ENCODE measurements at regions of chr2 and their contacts with region 1.

Region 1: GRCh38 chr2:207166039-207166348 is 246 bp upstream of the KLF7 start:
- DNase-seq: peak; percentile 99
- ATAC-seq: peak; percentile 95
- H3K4me3 ChIP-seq: peak overlapping the region; percentile 70
- H3K27ac ChIP-seq: peak overlapping the region in 1 of 2 donors; percentile 100
- H3K4me1 ChIP-seq: peaks cover 1 to 5% of the 10 kb centered on the region in 2 donors
- H3K27me3 ChIP-seq: no peaks in the 10 kb centered on the region

Region 2: DNA sequence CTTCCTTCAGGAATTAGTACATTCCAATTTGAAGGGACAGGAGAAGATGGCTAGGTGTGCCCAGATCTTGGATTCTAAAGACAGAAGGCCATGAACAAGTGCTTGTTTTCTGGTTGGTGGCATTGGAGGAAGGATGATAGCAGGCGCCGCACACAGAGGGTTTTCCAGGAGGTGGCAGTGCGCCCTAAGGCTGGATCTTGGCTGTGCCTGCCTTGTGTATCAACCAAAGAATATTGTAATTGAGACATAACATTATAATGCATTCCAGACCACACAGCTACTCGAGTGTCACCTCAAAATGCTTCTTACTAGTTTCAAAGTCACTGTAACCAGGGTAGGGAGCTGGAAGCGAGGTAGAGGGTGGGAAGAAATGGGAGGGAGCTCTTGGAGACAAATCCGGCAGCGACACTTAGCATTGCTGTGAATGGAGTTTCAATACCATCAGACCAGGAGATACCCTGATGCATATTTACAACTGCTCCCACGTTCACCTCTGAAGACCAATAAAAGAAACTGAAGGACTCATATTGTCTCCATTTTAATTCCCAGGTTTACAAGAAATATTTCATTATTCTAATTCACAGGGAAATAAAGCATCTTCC is 184.2 kb before region 1 on chr2:
- intact Hi-C with region 1: loop called (anchors 5 to 10 kb)
- DNase-seq: peak; percentile 85 to 93
- ATAC-seq: peak; percentile 86
- H3K4me3 ChIP-seq: no peak overlapping the region
- H3K27ac ChIP-seq: no peak overlapping the region
- H3K4me1 ChIP-seq: no peaks in the 10 kb centered on the region
- H3K27me3 ChIP-seq: no peaks in the 10 kb centered on the region

Region 3: GRCh38 chr2:207046724-207047123 is 119.3 kb before region 1 on chr2:
- intact Hi-C with region 1: loop called (anchors 5 kb)
- DNase-seq: no peak
- ATAC-seq: no peak
- H3K4me3 ChIP-seq: no peak overlapping the region
- H3K27ac ChIP-seq: no peak overlapping the region
- H3K4me1 ChIP-seq: peaks cover 2 to 6% of the 10 kb centered on the region in 2 donors
- H3K27me3 ChIP-seq: no peaks in the 10 kb centered on the region

Region 4: DNA sequence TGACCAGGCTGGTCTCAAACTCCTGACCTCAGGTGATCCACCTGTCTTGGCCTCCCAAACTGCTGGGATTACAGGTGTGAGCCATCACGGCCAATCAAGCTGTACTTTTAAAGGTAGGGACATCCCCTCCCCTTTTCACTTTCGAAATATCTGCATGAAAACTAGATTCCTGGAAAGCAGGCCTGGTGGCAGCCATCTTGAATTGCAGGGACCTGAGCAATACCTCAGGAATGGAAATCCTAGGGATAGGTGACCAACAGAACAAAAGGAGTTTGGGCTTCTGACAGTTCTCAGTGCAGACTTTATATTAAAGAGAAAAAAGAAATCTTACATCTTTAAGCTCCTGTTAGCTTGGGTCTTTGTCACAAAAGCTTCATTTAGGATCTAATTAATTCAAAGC is 62.9 kb before region 1 on chr2:
- intact Hi-C with region 1: no loop called
- DNase-seq: no peak
- ATAC-seq: no peak
- H3K4me3 ChIP-seq: no peak overlapping the region
- H3K27ac ChIP-seq: no peak overlapping the region
- H3K4me1 ChIP-seq: peaks cover 2 to 8% of the 10 kb centered on the region in 2 donors
- H3K27me3 ChIP-seq: no peaks in the 10 kb centered on the region

Region 5: GRCh38 chr2:207227062-207227748 is 61.2 kb after region 1 on chr2:
- intact Hi-C with region 1: no loop called
- DNase-seq: no peak
- ATAC-seq: peak; percentile 56
- H3K4me3 ChIP-seq: no peak overlapping the region
- H3K27ac ChIP-seq: no peak overlapping the region
- H3K4me1 ChIP-seq: peaks cover 1 to 4% of the 10 kb centered on the region in 2 donors
- H3K27me3 ChIP-seq: no peaks in the 10 kb centered on the region

Region 6: DNA sequence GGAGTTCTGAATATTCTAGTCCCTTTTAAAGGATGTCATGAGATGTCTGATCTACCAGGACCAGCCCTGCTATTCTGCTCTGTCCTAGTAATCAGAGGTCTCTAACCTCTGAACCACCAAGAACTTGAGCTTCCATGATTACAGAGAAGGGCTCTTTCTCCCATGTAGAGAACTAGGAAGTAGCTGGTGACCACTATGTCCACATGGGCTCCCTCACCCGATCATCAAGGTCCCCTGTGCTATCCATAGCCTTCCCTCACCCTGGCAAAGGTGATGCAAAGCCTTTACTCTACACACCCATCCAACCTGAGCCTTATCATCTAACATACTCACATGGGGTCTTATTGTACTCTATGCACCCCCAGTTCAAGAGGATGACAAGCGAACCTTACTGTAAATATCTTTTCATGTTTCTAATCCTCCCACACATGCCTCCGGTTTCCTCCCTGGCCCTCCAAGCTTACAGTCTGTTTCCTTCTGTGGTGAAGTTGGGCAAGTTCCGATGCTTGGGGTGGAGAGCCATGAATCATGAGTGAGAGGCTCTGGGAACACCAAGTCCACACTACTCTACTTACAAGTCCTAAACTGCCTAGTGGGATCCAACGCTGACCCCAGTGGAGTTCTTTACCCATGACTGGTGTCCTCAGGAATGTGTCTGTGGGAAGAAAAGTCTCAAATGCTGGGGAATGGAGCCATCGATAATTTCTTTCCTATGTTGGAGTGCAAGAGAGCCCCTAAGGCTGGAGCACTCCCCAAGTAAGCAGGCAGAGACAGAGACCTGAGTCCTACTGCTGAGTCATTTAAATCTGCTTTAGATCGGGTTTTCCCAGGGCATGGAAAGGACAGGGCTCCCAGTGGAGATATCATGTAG is 73.1 kb after region 1 on chr2:
- intact Hi-C with region 1: loop called in 1 of 2 experiments (anchors 5 kb)
- DNase-seq: peak; percentile 82 to 83
- ATAC-seq: peak; percentile 88
- H3K4me3 ChIP-seq: no peak overlapping the region
- H3K27ac ChIP-seq: peak overlapping the region; percentile 57 to 81
- H3K4me1 ChIP-seq: peaks cover 0 to 3% of the 10 kb centered on the region in 2 donors
- H3K27me3 ChIP-seq: no peaks in the 10 kb centered on the region

Region 7: GRCh38 chr2:207334624-207335371 is 168.8 kb after region 1 on chr2:
- intact Hi-C with region 1: loop called (anchors 2 to 5 kb)
- DNase-seq: peak; percentile 84 to 86
- ATAC-seq: peak; percentile 86
- H3K4me3 ChIP-seq: peak overlapping the region in 1 of 2 donors; percentile 31
- H3K27ac ChIP-seq: peak overlapping the region in 1 of 2 donors; percentile 88
- H3K4me1 ChIP-seq: no peaks in the 10 kb centered on the region
- H3K27me3 ChIP-seq: no peaks in the 10 kb centered on the region

Region 8: GRCh38 chr2:207513551-207514257 is 347.7 kb after region 1 on chr2:
- intact Hi-C with region 1: no loop called
- DNase-seq: no peak
- ATAC-seq: peak; percentile 69
- H3K4me3 ChIP-seq: no peak overlapping the region
- H3K27ac ChIP-seq: peak overlapping the region in 1 of 2 donors; percentile 57
- H3K4me1 ChIP-seq: peaks cover 0 to 4% of the 10 kb centered on the region in 2 donors
- H3K27me3 ChIP-seq: no peaks in the 10 kb centered on the region

Measured in aorta (tissue), 5 donors.